ENCODE measurements at regions of chr19 and their contacts with region 1.

Region 1: DNA sequence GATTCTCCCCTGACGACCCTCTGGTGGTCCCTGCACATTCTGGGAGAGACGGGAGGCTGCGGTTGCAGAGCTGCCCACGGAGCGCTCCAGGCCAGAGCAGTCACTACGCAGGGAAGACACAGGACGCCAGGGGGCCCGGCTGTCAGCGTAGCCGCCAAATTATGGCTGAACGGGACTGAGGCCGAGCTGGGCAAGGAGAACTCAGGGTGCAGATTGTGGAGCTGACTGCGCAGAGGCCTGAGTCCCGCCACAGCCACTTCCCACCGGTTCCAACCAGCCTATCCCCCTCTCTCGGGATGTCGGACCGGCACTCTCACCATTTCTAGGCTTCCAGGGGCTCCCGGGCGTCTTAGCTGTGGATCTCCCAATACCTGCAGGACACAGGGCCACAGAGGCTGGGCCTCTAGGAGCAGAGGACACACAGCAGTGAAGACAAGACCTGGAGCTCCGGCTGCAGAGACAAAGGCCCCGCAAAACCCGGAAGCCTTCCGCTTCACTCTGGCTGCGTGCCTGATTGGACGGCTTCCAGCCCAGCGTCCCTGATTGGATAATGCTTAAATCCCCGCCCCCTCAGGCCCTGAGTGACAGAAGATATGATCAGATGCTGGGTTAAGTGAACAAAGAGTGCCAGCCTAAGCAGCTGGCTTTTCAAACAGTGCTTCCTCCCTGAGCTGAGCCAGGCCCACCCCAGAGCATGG is at the start of gene ZNF737:
- DNase-seq: peak; percentile 78 to 97 (median 93)
- ATAC-seq: peak; percentile 96
- H3K4me3 Mint-ChIP-seq: peak within 1 kb of the TSS; percentile 97 to 100 (median 99)
- H3K27ac Mint-ChIP-seq: peak within 1 kb of the TSS; percentile 97 to 100 (median 98)
- H3K4me1 Mint-ChIP-seq: peaks cover 9 to 36% (median 27%) of the 10 kb centered on the region in 4 donors
- H3K27me3 Mint-ChIP-seq: no peaks in the 10 kb centered on the region
- polyA plus RNA-seq, gene ZNF737: 10.7 to 15.1 (median 10.8) TPM

Region 2: GRCh38 chr19:20209051-20209450 is 356.4 kb before region 1 on chr19:
- POLR2A ChIA-PET with region 1: no interaction called
- DNase-seq: no peak
- ATAC-seq: no peak
- H3K4me3 Mint-ChIP-seq: no peak overlapping the region
- H3K27ac Mint-ChIP-seq: no peak overlapping the region
- H3K4me1 Mint-ChIP-seq: no peaks in the 10 kb centered on the region
- H3K27me3 Mint-ChIP-seq: no peaks in the 10 kb centered on the region

Region 3: DNA sequence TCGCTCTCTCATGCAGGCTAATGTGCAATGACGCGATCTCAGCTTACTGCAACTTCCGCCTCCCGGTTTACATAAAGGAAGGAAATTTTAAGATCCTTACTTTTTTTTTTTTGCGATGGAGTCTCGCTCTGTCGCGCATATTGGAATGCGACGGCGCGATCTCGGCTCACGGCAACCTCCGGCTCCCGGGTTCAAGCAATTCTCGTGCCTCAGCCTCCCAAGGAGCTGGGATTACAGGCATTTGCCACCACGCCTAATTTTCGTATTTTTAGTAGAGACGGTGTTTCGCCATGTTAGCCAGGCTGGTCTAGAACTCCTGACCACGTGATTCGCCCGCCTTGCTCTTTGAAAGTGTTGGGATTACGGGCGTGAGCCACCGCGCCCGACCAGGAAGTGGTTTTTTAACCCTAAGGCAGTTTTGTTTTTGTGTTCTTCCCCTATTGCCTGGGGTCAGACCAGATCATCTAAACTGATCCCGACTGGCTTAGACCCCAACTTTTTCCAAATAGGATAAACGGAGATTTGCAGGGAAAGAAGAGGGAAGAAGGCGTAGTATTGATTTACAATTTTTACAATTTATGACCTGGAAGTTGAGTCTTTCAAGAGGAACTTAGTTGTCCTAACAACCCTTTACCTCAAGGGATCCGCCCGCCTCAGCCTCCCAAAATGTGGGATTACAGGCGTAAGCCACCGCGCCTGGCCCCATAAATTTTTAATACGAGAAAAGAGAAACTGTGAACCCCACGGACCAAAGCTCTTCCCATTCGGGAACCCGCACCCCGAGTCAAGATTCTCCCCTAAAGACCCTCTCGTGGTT is 141.9 kb before region 1 on chr19:
- POLR2A ChIA-PET with region 1: interaction called, 28 read pairs
- DNase-seq: peak in 4 of 10 donors; percentile 2 to 38 (median 26)
- ATAC-seq: no peak
- H3K4me3 Mint-ChIP-seq: peak overlapping the region; percentile 89 to 97 (median 94)
- H3K27ac Mint-ChIP-seq: peak overlapping the region; percentile 68 to 97 (median 92)
- H3K4me1 Mint-ChIP-seq: peaks cover 2 to 11% (median 7%) of the 10 kb centered on the region in 4 donors
- H3K27me3 Mint-ChIP-seq: peaks cover 0 to 3% (median 0%) of the 10 kb centered on the region in 5 donors

Region 4: DNA sequence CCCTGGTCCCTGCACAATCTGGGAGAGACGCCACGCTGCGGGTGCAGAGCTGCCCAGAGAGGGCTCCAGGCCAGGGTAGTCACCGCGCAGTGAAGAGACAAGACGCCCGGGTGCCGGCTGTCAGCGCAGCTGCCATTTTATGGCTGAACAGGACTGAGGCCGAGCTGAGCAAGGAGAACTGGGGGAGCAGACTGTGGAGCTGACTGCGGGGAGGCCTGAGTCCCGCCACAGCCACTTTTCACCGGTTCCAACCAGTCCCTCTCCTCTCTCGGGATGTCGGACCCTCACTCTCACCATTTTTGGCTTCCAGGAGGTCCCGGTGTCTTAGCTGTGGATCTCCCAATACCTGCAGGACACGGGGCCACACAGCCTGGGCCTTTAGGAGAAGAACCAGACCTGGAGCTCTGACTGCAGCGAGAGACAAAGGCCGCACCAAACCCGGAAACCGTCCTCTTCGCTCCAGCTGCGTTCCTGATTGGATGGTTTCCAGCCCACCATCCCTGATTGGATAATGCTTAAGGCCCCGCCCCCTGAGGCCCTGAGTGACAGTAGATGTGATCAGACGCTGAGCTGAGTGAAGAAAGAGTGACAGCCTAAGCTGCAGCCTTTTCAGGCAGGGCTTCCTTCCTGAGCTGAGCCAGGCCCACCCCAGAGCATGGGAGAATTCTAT is 95.8 kb after region 1 on chr19 and contains the start of gene ZNF626:
- POLR2A ChIA-PET with region 1: interaction called, 52 read pairs
- DNase-seq: peak; percentile 73 to 98 (median 90)
- ATAC-seq: peak; percentile 97 to 98
- H3K4me3 Mint-ChIP-seq: peak within 1 kb of the TSS; percentile 92 to 97 (median 94)
- H3K27ac Mint-ChIP-seq: peak within 1 kb of the TSS; percentile 94 to 98 (median 97)
- H3K4me1 Mint-ChIP-seq: peaks cover 12 to 50% (median 31%) of the 10 kb centered on the region in 4 donors
- H3K27me3 Mint-ChIP-seq: no peaks in the 10 kb centered on the region
- polyA plus RNA-seq, gene ZNF626: 4.8 to 13.7 (median 8.8) TPM

Region 5: DNA sequence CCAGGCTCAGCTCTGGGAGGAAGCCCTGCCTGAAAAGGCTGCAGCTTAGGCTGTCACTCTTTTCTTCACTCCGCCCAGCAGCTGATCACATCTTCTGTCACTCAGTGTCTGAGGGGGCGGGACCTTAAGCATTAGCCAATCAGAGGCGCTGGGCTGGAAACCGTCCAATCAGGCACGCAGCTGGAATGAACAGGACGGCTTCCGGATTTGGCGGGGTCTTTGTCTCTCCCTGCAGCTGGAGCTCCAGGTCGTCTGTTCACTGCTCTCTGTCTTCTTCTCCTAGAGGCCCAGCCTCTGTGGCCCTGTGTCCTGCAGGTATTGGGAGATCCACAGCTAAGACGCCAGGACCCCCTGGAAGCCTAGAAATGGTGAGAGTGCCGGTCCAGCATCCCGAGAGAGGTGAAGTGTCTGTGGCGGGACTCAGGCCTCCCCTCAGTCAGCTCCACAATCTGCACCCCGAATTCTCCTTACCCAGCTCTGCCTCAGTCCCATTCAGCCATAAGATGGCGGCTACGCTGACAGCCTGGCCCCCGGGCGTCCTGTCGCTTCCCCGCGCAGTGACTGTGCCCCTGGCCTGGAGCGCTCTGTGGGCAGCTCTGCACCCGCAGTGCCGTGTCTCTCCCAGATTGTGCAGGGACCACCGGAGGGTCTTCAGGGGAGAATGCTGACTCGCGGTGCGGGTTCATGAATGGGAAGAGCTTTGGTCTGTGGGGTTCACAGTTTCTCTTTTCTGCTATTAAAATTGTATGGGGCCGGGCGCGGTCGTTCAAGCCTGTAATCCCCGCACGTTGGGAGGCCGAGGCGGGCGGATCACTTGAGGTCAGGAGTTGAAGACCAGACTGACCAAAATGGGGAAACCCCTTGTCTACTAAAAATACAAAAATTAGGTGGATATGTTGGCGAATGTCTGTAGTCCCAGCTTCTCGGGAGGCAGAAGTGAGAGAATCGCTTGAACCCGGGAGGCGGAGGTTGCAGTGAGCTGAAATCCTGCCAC is 210.9 kb after region 1 on chr19 and contains the start of gene ZNF66:
- POLR2A ChIA-PET with region 1: interaction called, 24 read pairs
- DNase-seq: peak; percentile 79 to 97 (median 95)
- ATAC-seq: peak; percentile 98
- H3K4me3 Mint-ChIP-seq: peak within 1 kb of the TSS; percentile 92 to 100 (median 99)
- H3K27ac Mint-ChIP-seq: peak within 1 kb of the TSS; percentile 93 to 99 (median 96)
- H3K4me1 Mint-ChIP-seq: peaks cover 8 to 31% (median 23%) of the 10 kb centered on the region in 4 donors
- H3K27me3 Mint-ChIP-seq: no peaks in the 10 kb centered on the region
- polyA plus RNA-seq, gene ZNF66: 3.4 to 4.1 (median 3.6) TPM

Region 6: DNA sequence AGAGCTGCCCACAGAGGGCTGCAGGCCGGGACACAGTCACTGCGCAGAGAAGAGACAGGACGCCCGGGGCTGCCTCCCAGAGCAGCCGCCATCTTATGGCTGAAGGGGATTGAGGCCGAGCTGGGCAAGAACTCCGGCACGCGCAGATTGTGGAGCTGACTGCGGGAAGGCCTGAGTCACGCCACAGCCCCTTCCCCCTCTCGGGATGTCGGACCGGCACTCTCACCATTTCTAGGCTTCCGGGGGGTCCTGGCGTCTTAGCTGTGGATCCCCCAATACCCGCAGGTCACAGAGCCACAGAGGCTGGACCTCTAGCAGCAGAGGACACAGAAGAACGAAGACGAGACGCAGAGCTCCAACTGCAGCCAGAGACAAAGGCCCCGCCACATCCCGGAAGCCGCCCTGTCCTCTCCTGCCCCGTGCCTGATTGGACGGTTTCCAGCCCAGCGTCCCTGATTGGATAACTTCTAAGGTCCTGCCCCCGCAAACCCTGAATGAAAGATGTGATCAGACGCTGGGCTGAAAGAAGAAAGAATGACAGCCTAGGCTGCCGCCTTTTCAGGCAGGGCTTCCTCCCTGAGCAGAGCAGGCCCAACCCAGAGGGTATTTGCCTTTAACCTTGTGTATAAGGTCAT is 1270.5 kb after region 1 on chr19 and contains the start of gene ZNF43:
- POLR2A ChIA-PET with region 1: interaction called, 11 read pairs
- DNase-seq: peak; percentile 79 to 97 (median 94)
- ATAC-seq: peak; percentile 97 to 99
- H3K4me3 Mint-ChIP-seq: peak within 1 kb of the TSS; percentile 97 to 100 (median 99)
- H3K27ac Mint-ChIP-seq: peak within 1 kb of the TSS; percentile 97 to 99 (median 99)
- H3K4me1 Mint-ChIP-seq: peaks cover 3 to 40% (median 29%) of the 10 kb centered on the region in 4 donors
- H3K27me3 Mint-ChIP-seq: no peaks in the 10 kb centered on the region
- polyA plus RNA-seq, gene ZNF43: 14.8 to 18.0 (median 17.6) TPM

Measured in naive thymus-derived CD8-positive, alpha-beta T cell (primary cell).